GM12878 (cell line): ENCODE measurements at regions of chr19 and their contacts with region 1.

Region 1: DNA sequence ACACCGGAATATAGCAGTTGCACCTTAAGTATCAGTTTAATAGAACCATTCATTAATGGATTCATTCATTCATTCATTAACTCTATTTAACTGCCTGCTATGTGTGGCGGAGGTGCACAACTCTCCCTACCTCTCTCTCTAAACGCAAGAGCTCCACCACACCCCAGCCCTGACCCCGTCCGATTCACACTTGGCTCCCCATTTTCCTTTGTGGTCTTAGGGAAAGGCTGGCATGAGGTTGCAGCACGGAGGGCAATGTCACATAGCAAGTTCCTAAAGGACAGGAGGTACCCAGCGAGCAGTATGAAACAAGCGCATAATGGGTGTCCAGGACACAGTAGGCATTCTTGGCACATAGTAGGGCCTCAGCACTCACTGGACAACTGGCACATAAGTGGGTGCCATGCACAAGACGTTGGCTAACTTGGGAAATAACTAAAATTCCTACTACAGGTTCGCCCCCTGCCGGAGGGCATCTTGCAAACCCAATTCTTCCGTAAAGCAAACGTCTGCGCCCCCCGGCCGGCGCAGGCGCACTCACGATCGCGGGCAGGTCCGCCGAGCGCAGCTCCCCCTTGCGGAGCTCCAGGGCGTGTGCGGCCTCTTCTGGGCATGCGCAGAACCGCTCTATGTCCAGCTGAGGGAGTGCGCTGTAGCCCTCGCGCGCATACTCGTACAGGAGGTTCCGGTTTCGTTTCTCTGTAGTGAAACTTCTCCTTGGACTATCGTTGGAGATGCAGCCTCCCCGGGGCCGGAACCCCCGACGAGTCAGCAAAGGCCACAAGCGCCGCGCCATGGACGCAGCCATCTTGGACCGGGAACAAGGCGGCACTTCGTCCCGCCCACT is at the start of gene SARS2:
- DNase-seq: peak; percentile 79
- ATAC-seq: peak; percentile 72
- H3K4me3 ChIP-seq: peak within 1 kb of the TSS; percentile 98
- H3K27ac ChIP-seq: peak within 1 kb of the TSS; percentile 97
- H3K4me1 ChIP-seq: peaks cover 6% of the 10 kb centered on the region
- H3K27me3 ChIP-seq: no peaks in the 10 kb centered on the region
- CTCF ChIP-seq: peak; percentile 98 to 100 (median 99); a peak in 5 of 6 replicates
- EP300 ChIP-seq: peak in 1 of 2 experiments; percentile 27; a peak in 1 of 4 replicates
- POLR2A ChIP-seq: peak; percentile 86
- RAD21 ChIP-seq: peak; percentile 58
- polyA plus RNA-seq, gene SARS2: 2.6 to 7.8 TPM

Region 2: DNA sequence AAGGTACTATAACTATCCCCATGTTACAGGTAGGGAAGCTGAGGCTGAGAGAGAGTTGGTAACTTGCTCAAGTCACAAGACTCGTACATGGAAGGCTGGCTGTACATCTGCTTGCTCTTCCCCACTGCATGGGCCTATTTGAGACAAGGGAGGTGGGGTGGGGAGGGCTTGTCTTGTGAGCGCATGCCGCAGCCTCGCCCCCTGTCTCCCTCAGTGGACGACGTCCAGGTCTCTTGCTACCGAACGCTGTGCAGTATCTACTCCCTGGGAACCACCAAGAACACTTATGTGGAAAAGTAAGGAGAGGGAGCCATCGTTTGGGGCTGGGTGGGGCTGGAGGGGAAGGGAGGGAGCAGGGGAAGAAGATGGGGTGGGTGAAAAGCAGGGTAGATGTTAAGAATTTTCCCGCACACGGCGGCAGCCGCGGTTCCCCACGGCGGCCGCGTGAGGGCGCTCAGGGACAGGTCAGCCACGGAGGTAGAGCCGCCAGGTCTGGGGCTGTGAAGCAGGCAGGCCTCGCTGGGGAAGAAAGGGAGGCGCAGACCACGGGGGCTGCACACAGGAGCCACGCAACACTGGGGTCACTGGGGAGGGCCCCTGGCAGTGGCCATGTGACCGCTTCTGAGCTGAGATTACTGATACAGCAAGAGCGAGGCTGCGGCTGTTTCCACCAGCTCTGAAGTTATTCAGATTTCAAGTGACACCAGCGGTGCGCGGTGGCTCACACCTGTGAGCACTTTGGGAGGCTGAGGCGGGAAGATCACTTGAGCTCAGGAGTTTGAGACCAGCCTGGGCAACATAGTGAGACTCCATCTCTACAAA is 415.1 kb before region 1 on chr19:
- CTCF ChIA-PET with region 1: interaction called, 14 read pairs
- POLR2A ChIA-PET with region 1: interaction called, 3 read pairs
- RAD21 ChIA-PET with region 1: interaction called, 12 read pairs
- SMC1A ChIA-PET with region 1: interaction called, 5 read pairs
- in situ Hi-C with region 1: no loop called
- intact Hi-C with region 1: loop called (anchors 2 kb)
- DNase-seq: no peak
- ATAC-seq: peak; percentile 96
- H3K4me3 ChIP-seq: no peak overlapping the region
- H3K27ac ChIP-seq: no peak overlapping the region
- H3K4me1 ChIP-seq: peaks cover 6% of the 10 kb centered on the region
- H3K27me3 ChIP-seq: no peaks in the 10 kb centered on the region
- CTCF ChIP-seq: peak; percentile 89 to 98 (median 90); a peak in 5 of 6 replicates
- EP300 ChIP-seq: no peak
- POLR2A ChIP-seq: no peak
- RAD21 ChIP-seq: peak; percentile 74

Region 3: DNA sequence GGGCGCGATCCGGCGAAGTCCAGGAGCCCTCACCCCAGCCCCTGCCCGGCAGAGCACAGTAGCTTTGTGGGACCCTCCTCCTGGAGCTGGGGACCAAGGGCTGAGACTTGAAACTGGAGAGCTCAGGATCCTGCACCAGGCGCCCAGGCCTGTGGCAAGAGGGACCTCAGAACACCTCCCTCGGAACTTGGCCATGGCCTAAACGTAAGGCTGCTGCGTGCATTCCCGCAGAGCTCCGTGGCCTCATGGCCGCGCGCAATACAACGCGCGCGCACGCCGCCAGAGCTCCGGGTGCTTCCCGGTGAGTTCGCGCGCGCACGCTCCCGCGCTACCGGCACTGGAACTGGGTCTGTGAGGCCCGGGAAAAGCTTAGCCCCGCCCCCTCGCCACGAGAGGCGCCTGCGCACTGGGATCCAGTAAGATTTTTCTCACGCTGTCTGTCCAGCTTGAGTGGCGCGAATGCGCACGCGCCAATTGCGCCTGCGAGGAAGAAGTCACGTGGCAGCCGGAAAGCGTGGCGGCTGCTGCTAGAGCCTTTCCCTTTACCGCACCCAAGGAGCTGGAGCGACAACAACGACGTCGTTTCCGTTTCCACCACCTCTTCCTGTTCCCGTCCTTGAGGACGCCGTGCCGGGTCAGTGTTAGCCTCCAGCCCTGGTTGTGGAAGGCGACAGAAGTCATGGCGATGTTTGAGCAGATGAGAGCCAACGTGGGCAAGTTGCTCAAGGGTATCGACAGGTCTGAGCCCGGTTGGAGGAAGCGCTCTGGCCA is 311.4 kb before region 1 on chr19 and contains the start of gene EIF3K:
- CTCF ChIA-PET with region 1: interaction called, 13 read pairs
- POLR2A ChIA-PET with region 1: interaction called, 5 read pairs
- RAD21 ChIA-PET with region 1: interaction called, 10 read pairs
- SMC1A ChIA-PET with region 1: interaction called, 3 read pairs
- in situ Hi-C with region 1: no loop called
- intact Hi-C with region 1: no loop called
- DNase-seq: peak; percentile 97
- ATAC-seq: peak; percentile 62
- H3K4me3 ChIP-seq: peak within 1 kb of the TSS; percentile 98
- H3K27ac ChIP-seq: peak within 1 kb of the TSS; percentile 98
- H3K4me1 ChIP-seq: peaks cover 12% of the 10 kb centered on the region
- H3K27me3 ChIP-seq: no peaks in the 10 kb centered on the region
- CTCF ChIP-seq: no peak
- EP300 ChIP-seq: no peak
- POLR2A ChIP-seq: peak; percentile 98
- RAD21 ChIP-seq: no peak
- polyA plus RNA-seq, gene EIF3K: 715 to 863 TPM

Region 4: DNA sequence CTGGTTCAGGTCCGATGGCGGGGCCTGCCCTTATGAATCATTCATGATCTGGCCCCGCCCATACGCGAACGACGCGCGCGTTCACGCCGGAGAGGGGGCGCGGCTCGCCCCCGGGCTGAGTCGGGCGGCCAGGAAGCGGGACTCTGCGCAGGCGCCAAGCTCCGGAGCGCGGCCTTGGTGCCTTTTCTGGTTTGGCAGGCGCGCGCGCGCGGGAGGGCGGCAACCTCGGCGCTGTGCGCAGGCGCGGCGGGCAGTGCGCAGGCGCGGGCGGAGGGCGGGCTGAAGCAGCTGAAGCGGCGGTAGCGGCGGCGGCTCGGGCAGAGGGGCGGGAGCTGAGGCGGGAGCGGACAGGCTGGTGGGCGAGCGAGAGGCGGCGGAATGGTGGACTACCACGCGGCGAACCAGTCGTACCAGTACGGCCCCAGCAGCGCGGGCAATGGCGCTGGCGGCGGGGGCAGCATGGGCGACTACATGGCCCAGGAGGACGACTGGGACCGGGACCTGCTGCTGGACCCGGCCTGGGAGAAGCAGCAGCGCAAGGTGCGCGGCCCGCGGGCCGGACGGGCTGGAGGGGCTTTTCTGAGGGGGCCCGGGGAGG is 282.7 kb before region 1 on chr19 and contains the start of gene ACTN4:
- CTCF ChIA-PET with region 1: interaction called, 25 read pairs
- POLR2A ChIA-PET with region 1: no interaction called
- RAD21 ChIA-PET with region 1: interaction called, 13 read pairs
- SMC1A ChIA-PET with region 1: interaction called, 3 read pairs
- in situ Hi-C with region 1: no loop called
- intact Hi-C with region 1: no loop called
- DNase-seq: peak; percentile 78
- ATAC-seq: peak; percentile 91
- H3K4me3 ChIP-seq: peak within 1 kb of the TSS; percentile 100
- H3K27ac ChIP-seq: peak within 1 kb of the TSS; percentile 79
- H3K4me1 ChIP-seq: peaks cover 13% of the 10 kb centered on the region
- H3K27me3 ChIP-seq: no peaks in the 10 kb centered on the region
- CTCF ChIP-seq: no peak
- EP300 ChIP-seq: no peak
- POLR2A ChIP-seq: peak; percentile 99
- RAD21 ChIP-seq: no peak
- polyA plus RNA-seq, gene ACTN4: 2.4 to 6.7 TPM

Region 5: DNA sequence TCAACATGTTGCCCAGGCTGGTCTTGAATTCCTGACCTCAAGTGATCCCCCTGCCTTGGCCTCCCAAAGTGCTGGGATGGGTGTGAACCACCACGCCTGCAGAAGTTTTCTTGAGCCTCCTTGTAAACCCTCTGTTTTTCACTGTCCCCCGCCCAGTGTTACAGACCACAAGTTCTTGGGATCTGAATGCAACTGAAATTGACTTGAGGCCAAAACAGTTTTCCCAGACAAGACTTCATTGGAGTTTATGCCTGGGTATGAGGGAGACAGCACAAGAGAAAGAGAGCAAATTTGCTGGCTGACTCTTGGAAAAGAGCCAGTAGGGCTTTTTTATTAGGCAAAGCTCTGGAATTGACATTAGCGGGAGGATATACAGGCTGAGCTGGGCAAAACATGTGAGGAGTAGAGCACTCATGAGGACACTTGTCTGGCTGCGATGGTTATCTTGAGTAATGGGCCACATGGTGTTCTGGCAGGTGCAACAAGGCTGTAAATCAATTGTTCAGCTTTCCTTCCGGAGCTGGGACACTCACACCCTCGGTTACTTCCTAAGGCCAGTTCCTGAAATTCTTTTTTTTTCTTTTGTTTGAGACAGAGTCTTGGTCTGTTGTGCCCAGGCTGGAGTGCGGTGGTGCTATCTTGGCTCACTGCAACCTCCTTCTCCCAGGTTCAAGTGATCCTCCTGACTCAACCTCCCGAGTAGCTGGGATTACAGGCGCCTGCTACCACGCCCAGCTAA is 67.7 kb before region 1 on chr19:
- CTCF ChIA-PET with region 1: interaction called, 10 read pairs
- POLR2A ChIA-PET with region 1: interaction called, 9 read pairs
- RAD21 ChIA-PET with region 1: interaction called, 5 read pairs
- SMC1A ChIA-PET with region 1: interaction called, 4 read pairs
- in situ Hi-C with region 1: no loop called
- intact Hi-C with region 1: loop called (anchors 5 kb)
- DNase-seq: no peak
- ATAC-seq: no peak
- H3K4me3 ChIP-seq: no peak overlapping the region
- H3K27ac ChIP-seq: no peak overlapping the region
- H3K4me1 ChIP-seq: peaks cover 37% of the 10 kb centered on the region
- H3K27me3 ChIP-seq: no peaks in the 10 kb centered on the region
- CTCF ChIP-seq: no peak
- EP300 ChIP-seq: no peak
- POLR2A ChIP-seq: no peak
- RAD21 ChIP-seq: no peak

Region 6: DNA sequence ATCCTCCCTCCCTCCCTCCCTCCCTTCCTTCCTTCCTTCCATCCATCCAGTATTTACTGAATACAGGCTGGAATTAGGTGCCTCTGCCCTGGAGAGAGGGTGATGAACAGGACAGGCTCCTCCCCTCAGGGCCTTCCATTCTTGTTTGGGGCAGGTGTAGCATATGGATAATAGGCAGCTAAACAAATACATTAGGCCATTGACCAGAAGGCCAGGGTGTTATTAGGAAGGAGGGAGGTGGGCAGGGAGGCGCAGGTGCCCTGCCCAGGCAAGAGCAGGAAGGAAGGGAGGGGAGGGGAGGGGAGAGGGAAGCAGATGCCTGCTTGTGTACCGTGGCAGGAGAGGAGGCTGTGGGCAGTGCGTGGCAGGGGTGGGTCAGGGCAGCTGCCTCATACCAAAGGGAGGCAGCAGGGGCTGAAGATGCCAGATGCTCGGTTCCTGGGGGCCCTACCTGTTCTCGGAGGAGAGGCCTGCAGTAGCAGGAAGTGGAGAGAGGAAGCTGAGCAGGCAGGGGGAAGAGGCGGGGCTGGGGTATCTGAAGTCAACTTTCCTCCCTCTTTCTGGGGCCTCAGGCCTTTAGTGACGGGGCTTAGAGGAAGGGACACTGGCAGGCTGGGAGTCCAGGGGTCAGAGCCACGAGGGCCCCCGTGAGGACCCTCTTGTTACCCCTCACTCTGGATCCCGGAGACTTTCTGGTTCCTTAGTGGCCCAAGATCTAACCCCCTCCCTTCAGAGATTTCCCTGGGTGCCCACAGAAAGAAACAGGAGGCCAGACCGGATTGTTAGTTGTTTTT is 52.2 kb before region 1 on chr19 and contains the start of gene RINL:
- CTCF ChIA-PET with region 1: interaction called, 20 read pairs
- POLR2A ChIA-PET with region 1: interaction called, 7 read pairs
- RAD21 ChIA-PET with region 1: interaction called, 4 read pairs
- SMC1A ChIA-PET with region 1: interaction called, 3 read pairs
- in situ Hi-C with region 1: no loop called
- intact Hi-C with region 1: no loop called
- DNase-seq: no peak
- ATAC-seq: peak; percentile 97
- H3K4me3 ChIP-seq: peak within 1 kb of the TSS; percentile 73
- H3K27ac ChIP-seq: peak within 1 kb of the TSS; percentile 95
- H3K4me1 ChIP-seq: peaks cover 7% of the 10 kb centered on the region
- H3K27me3 ChIP-seq: no peaks in the 10 kb centered on the region
- CTCF ChIP-seq: no peak
- EP300 ChIP-seq: no peak
- POLR2A ChIP-seq: peak; percentile 82
- RAD21 ChIP-seq: no peak
- polyA plus RNA-seq, gene RINL: 14.5 to 16.3 TPM

Region 7: GRCh38 chr19:38899447-38900219 is 30.5 kb before region 1 on chr19 and contains the starts of genes NFKBIB and SIRT2:
- CTCF ChIA-PET with region 1: interaction called, 50 read pairs
- POLR2A ChIA-PET with region 1: interaction called, 9 read pairs
- RAD21 ChIA-PET with region 1: interaction called, 20 read pairs
- SMC1A ChIA-PET with region 1: interaction called, 18 read pairs
- in situ Hi-C with region 1: no loop called
- intact Hi-C with region 1: no loop called
- DNase-seq: peak; percentile 99
- ATAC-seq: peak; percentile 96
- H3K4me3 ChIP-seq: peak within 1 kb of the TSS; percentile 90
- H3K27ac ChIP-seq: peak within 1 kb of the TSS; percentile 75
- H3K4me1 ChIP-seq: peaks cover 5% of the 10 kb centered on the region
- H3K27me3 ChIP-seq: no peaks in the 10 kb centered on the region
- CTCF ChIP-seq: no peak
- EP300 ChIP-seq: no peak
- POLR2A ChIP-seq: peak; percentile 79
- RAD21 ChIP-seq: no peak
- polyA plus RNA-seq, gene NFKBIB: 1.2 to 4.3 TPM
- polyA plus RNA-seq, gene SIRT2: 1.4 to 5.1 TPM

Region 8: DNA sequence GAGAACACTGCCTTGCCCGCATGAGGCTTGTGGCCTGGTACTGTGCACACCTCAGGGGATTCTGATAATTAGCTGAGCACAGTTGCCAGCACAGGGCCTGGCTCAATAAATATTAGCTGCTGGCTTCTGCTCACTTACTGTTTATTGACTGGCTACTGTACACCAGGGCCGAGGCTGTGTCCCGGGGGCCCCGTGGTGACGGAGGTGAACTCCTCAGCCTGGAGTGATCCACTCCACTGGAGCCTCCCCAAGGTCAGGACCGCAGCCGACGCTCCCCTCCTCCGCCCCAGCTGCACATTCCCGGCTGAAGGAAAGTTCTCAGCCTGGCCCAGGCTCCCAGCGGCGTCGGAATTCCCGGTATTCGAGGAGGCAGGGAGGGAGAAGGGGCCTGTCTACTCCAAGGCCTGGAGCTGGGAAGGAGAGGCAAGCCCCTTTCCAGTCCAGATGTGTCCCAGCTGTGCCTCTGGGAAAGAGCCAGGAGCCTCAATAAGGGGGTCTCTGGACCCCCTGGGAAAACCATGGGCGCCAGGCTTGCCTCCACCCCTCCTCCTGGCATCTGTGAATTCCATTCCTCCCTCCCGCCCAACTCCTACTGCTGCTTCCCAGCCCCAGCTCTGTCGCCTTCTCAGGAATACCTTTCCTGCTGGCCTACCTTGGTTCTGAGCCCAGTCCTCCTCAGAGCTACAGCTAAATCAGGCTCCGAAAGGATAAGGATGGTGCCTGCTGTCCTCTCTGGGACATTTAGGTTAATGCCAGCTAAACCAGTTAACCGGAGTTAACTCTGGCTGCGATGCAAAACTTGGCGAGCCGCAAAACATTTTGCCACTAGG is 498.3 kb after region 1 on chr19:
- CTCF ChIA-PET with region 1: no interaction called
- POLR2A ChIA-PET with region 1: no interaction called
- RAD21 ChIA-PET with region 1: no interaction called
- SMC1A ChIA-PET with region 1: no interaction called
- in situ Hi-C with region 1: no loop called
- intact Hi-C with region 1: no loop called
- DNase-seq: no peak
- ATAC-seq: no peak
- H3K4me3 ChIP-seq: no peak overlapping the region
- H3K27ac ChIP-seq: no peak overlapping the region
- H3K4me1 ChIP-seq: peaks cover 25% of the 10 kb centered on the region
- H3K27me3 ChIP-seq: no peaks in the 10 kb centered on the region
- CTCF ChIP-seq: no peak
- EP300 ChIP-seq: no peak
- POLR2A ChIP-seq: peak; percentile 29; the same call in 1 of the 2 replicates
- RAD21 ChIP-seq: no peak